ENCODE measurements at regions of chr4 and their contacts with region 1.

Region 1: GRCh38 chr4:184668511-184669114 is 19.1 kb downstream of the PRIMPOL start:
- DNase-seq: no peak
- CTCF ChIP-seq: no peak

Region 2: DNA sequence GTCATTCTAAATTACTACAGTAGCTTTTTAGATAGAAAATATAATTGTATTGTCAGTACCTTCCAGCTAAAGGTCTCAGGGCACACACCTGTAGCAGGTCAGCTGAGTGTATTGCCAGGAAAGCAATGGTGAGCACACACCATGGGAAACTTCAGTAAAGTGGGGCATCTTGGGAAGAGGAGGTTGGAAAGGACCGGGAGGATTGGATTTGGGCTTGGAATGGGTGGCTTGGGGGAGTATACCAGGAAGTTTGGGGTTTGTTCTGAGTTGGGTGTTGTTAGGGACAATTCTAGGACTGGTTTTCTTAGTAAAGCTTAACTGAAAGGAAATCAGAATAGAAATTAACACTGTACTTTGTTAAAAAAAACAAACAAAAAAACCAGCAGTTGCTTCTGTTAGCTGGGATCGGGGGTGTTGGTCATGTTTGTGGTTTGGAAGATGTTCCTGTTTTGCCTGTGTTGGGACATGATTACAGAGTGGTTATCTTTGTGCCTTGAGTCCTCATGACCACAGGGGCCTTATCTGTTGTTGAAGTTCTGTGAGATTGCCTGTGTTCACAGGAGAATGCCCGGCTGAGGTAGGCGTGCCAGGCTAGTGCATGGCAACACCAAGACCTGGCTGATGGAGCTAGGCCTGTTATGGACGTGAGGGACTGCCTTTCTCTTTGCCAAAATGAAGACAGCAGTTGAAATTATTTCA is 16.0 kb after region 1 on chr4:
- CTCF ChIA-PET with region 1: interaction called, 12 read pairs
- POLR2A ChIA-PET with region 1: no interaction called
- DNase-seq: no peak
- CTCF ChIP-seq: no peak